GM10248 (cell line): ENCODE measurements at regions of chr4 and their contacts with region 1.

Region 1: DNA sequence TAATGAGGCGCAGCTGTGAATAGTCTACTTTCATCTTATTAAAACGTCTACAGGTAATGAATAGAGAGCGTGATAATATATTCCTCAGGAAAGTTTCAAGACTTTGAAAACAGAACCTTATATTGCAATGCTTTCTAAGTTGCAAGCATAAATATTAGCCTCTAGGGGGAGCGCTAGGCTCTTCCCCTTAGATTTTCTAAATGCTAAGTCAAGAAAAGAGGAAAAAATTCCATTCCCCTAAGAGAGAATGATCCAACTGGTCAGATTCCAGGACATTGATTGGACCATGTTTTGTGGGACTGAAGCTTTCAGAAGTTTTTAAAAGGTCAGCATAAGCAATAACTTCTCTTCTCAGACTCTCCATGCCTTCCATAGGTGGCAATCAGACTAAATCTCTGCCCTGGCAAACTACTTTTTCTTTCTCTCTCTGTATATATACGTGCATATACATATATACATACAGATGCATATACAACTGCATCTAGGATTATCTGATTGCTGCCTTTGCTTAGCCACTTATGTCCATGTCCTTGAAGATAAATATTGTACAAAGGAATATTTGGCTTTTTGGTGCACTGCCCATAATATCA is 492.9 kb downstream of the INPP4B start:
- DNase-seq: no peak
- CTCF ChIP-seq: peak; percentile 65

Region 2: GRCh38 chr4:142339053-142339452 is 14.2 kb before region 1 on chr4:
- CTCF ChIA-PET with region 1: interaction called, 43 read pairs
- POLR2A ChIA-PET with region 1: no interaction called
- DNase-seq: no peak
- CTCF ChIP-seq: no peak

Region 3: GRCh38 chr4:142379277-142380057 is 26.2 kb after region 1 on chr4:
- CTCF ChIA-PET with region 1: interaction called, 10 read pairs
- POLR2A ChIA-PET with region 1: no interaction called
- DNase-seq: no peak
- CTCF ChIP-seq: no peak